Left colon (tissue), 2 donors: ENCODE measurements at regions of chr17 and their contacts with region 1.

Region 1: DNA sequence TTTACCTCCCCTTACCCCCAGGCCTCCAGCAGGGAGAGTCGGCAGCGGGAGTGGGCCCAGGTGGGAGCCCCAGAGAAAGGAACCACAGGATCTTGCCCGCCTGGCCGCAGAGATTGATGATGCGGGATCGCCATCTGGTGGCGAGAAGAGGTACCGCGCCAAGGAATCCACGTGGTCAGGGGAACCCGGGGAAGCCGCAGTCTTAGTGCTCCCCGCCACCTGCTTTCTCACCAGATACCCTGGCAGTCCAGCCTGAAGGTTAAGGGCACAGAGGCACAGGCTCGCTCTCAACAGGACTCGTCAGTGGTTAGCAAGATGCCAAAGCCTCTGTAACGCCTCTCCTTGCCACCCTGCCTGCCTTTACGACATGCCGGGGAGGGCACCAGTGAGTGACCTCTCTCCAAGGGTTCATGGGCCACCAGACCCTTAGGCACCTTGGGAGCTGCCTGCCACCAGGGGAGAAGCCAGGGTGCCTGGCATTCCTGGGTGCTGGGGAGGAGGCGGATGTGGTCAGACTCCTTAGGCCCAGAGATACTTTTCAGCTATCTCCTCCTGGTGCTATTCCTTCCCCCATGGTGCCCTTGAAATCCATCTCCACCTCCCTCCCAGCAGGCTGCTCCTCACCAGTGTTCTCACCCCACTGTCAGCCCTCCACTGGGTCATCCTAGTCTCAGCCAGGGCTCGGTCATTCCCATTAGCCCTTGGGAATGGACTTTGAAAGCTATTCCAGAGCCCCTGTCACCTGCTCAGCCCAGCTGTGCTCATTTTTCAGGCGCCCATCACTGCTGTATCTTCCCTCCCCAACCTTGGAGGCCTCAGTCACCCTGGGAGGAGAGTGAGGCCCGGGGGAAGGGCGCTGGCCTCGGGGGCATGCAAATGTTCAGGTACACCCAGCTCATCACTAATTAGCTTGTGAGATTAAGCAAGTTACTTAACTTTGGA is 5.5 kb upstream of the RHBDF2 start:
- DNase-seq: peak; percentile 64 to 84
- ATAC-seq: peak; percentile 75

Region 2: GRCh38 chr17:75950821-75951554 is 555.7 kb before region 1 on chr17:
- intact Hi-C with region 1: no loop called
- DNase-seq: no peak
- ATAC-seq: no peak

Region 3: DNA sequence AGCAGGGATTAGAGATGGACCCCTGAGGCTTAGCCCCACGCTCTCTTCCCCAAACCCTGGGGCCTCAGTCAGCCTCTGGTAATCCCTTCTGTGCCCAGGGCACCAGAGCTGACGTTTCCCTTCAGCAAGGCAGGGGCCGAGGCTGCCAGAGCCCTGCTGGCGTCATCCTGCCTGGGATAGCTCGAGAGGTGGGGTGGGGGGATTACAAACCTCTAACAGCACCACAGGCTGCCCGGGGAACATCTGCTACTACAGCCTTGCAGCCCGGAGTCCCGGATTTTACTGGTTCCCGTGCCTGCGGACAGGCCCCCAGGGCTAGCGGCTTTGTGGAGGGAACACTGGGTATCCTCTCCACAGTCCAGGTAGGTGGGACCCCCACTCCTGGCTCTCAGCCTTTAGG is 39.3 kb before region 1 on chr17 and contains the start of gene AANAT:
- intact Hi-C with region 1: loop called (anchors 5 kb)
- DNase-seq: no peak
- ATAC-seq: no peak
- total RNA-seq, gene AANAT: not detected